ENCODE measurements at regions of chr9 and their contacts with region 1.

Region 1: GRCh38 chr9:97598461-97599288 is 34.5 kb downstream of the TSTD2 start:
- DNase-seq: peak; percentile 82
- ATAC-seq: peak; percentile 93
- H3K4me3 ChIP-seq: no peak overlapping the region
- H3K27ac ChIP-seq: no peak overlapping the region
- H3K4me1 ChIP-seq: no peaks in the 10 kb centered on the region; the same call in 1 of the 2 replicates
- H3K27me3 ChIP-seq: no peaks in the 10 kb centered on the region
- CTCF ChIP-seq: peak; percentile 85
- POLR2A ChIP-seq: no peak
- RAD21 ChIP-seq: peak; percentile 84

Region 2: DNA sequence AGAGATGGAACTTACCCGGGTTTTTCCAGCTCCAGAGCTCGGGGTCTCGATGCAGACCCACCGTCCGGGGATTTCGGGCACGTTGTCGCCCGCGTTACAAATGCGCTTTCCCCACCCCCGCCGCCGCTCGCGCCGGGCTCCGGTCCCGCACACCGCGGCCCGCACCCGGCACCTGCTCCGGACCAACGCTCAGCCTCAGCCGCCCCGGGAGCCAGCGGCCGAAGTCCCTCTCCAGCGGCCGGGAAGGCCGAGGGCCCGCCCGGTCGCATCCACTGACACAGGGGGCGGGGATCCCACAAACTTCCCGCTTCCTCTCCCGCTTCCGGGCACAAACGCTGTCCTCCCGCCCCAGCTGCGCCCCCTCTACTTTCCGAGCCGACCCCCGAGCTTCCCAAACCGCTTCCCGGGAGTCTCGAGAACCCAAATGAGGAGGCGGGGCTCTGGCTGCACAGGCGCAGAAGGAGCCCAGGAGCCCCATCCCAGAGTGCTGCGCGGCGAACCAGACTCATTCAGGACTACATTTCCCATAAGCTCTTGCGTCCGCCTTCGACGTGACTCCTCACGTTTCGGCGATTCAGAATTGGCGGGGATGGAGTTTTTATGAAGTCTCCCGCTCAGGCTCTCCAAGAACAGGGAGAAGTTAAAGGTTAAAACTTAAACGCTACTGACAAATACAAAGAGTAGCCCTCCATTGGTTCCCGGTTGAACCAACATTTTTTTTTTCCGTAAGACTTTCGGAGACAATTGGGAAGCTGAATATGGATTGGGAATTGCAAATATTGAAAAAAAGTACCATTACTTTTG is 744.4 kb before region 1 on chr9 and contains the start of gene ZNF782:
- CTCF ChIA-PET with region 1: interaction called, 6 read pairs
- POLR2A ChIA-PET with region 1: no interaction called
- dilution Hi-C with region 1: no loop called
- in situ Hi-C with region 1: no loop called
- intact Hi-C with region 1: loop called (anchors 5 kb)
- DNase-seq: peak; percentile 93
- ATAC-seq: peak; percentile 96
- H3K4me3 ChIP-seq: peak within 1 kb of the TSS; percentile 58
- H3K27ac ChIP-seq: peak within 1 kb of the TSS; percentile 31; the same call in 1 of the 2 replicates
- H3K4me1 ChIP-seq: peaks cover 7% of the 10 kb centered on the region
- H3K27me3 ChIP-seq: no peaks in the 10 kb centered on the region
- CTCF ChIP-seq: no peak
- POLR2A ChIP-seq: no peak
- RAD21 ChIP-seq: no peak
- total RNA-seq, gene ZNF782: 3.1 and 4.3 TPM in 2 replicates

Region 3: GRCh38 chr9:97411789-97412625 is 186.7 kb before region 1 on chr9 and contains the start of gene TDRD7:
- CTCF ChIA-PET with region 1: interaction called, 6 read pairs
- POLR2A ChIA-PET with region 1: no interaction called
- dilution Hi-C with region 1: no loop called
- in situ Hi-C with region 1: no loop called
- intact Hi-C with region 1: loop called (anchors 1 kb)
- DNase-seq: peak; percentile 75
- ATAC-seq: peak; percentile 96
- H3K4me3 ChIP-seq: peak within 1 kb of the TSS; percentile 85
- H3K27ac ChIP-seq: no peak within 1 kb of the TSS; the same call in 1 of the 2 replicates
- H3K4me1 ChIP-seq: peaks cover 3% of the 10 kb centered on the region; the same call in 1 of the 2 replicates
- H3K27me3 ChIP-seq: peaks cover 11% of the 10 kb centered on the region; the same call in 1 of the 2 replicates
- CTCF ChIP-seq: peak; percentile 100
- POLR2A ChIP-seq: no peak
- RAD21 ChIP-seq: peak; percentile 68
- total RNA-seq, gene TDRD7: 8.1 and 9.7 TPM in 2 replicates

Region 4: GRCh38 chr9:97468658-97469448 is 129.8 kb before region 1 on chr9:
- CTCF ChIA-PET with region 1: interaction called, 119 read pairs
- POLR2A ChIA-PET with region 1: interaction called, 3 read pairs
- dilution Hi-C with region 1: no loop called
- in situ Hi-C with region 1: no loop called
- intact Hi-C with region 1: loop called (anchors 1 kb)
- DNase-seq: peak; percentile 65
- ATAC-seq: peak; percentile 97
- H3K4me3 ChIP-seq: no peak overlapping the region
- H3K27ac ChIP-seq: no peak overlapping the region
- H3K4me1 ChIP-seq: peaks cover 2% of the 10 kb centered on the region
- H3K27me3 ChIP-seq: no peaks in the 10 kb centered on the region
- CTCF ChIP-seq: peak; percentile 95
- POLR2A ChIP-seq: peak; percentile 55; the same call in 1 of the 2 replicates
- RAD21 ChIP-seq: peak; percentile 98

Region 5: DNA sequence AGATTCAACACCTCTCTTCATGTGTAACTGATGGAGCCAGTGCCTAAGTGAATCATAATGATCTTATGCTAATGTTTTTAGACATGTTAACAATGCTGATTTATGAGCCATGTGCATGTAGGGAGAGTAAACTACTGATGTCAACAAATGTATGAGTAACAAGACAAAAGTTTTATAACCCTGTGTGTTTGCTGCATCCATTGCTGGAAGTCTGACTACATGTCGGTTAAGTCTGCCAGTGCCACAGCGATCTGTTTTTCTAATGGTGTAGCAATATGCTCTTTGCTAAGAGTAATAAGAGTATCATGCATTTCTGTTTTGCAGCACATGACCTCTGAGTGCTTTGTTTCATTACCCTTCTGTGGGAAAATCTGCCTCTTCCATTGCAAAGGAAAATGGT is 123.6 kb before region 1 on chr9:
- CTCF ChIA-PET with region 1: interaction called, 119 read pairs
- POLR2A ChIA-PET with region 1: no interaction called
- dilution Hi-C with region 1: no loop called
- in situ Hi-C with region 1: no loop called
- intact Hi-C with region 1: no loop called
- DNase-seq: peak; percentile 89
- ATAC-seq: peak; percentile 82
- H3K4me3 ChIP-seq: no peak overlapping the region
- H3K27ac ChIP-seq: no peak overlapping the region
- H3K4me1 ChIP-seq: peaks cover 18% of the 10 kb centered on the region
- H3K27me3 ChIP-seq: no peaks in the 10 kb centered on the region
- CTCF ChIP-seq: no peak
- POLR2A ChIP-seq: no peak
- RAD21 ChIP-seq: no peak

Region 6: DNA sequence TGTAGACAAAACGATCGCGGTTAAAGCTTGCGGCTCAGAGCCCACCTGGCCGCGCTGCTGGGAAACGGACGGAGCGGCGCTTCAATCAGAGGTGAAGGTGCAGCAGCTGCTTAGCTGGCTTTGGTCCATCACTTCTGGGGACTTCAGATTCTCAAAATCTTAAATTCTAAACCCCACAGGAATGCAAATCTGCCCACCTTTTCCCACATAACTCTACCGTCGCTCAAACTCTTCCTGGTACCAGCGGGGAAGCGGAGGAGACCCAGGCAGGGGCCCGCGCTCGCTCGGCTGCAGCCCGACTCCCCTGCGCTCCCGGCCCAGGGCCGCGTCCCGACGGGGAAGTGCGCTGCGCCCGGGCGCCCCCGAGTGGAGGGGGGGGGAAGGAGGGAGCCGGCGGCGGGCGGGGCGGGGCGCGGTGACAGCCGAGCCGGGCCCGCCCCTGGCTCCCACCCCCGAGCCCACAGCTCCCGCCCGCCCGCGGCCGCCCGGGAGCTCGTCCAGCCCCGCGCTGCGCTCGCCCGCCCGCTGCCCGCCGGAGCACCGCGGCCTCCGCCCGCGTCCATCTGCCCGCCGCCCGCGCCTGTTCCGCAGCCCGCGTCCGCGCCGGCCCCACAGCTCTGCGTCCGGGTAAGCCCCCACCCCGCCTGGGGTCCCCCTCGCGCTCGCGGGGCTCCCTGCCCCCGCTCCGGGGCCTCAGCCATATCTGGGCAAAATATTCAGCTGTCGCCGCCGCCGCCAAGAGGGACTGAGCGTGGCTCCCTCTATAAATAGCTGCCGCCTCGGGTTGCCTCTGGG is 97.3 kb before region 1 on chr9 and contains the start of gene TMOD1:
- CTCF ChIA-PET with region 1: interaction called, 13 read pairs
- POLR2A ChIA-PET with region 1: no interaction called
- dilution Hi-C with region 1: no loop called
- in situ Hi-C with region 1: no loop called
- intact Hi-C with region 1: no loop called
- DNase-seq: peak; percentile 34
- ATAC-seq: peak; percentile 94
- H3K4me3 ChIP-seq: peak within 1 kb of the TSS; percentile 68
- H3K27ac ChIP-seq: no peak within 1 kb of the TSS; the same call in 1 of the 2 replicates
- H3K4me1 ChIP-seq: peaks cover 18% of the 10 kb centered on the region; the same call in 1 of the 2 replicates
- H3K27me3 ChIP-seq: peaks cover 23% of the 10 kb centered on the region
- CTCF ChIP-seq: peak; percentile 18; the same call in 1 of the 2 replicates
- POLR2A ChIP-seq: no peak
- RAD21 ChIP-seq: peak; percentile 16; the same call in 1 of the 2 replicates
- total RNA-seq, gene TMOD1: 0.18 and 0.28 TPM in 2 replicates

Region 7: DNA sequence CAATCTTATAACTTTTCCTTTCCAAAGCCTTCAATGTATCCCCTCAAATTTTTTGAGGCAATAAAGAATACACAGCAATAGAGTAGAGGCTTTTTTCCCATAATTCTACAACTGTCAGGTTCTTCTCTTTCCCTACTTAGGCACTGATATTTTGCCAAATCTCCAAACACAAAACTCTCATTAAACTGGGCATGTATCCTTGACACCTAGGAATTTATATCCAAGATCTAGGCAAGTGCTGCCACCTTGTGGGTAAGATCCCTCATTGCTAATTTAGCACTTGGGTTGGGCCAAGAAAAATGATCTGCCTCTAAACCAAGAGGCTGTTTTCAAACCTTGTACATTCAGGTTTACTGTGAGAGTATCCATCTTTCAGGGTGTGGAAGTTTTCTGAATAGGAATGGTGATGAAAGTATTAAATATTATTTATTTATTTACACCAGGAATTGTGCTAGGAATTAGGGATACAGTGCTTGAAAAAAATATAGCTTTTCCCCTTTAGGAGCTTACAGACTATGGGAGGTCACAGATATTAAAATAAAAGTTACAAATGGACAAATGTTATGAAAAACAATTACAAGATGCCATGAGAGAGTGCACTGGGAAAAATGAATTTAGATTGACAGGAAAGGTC is 16.9 kb after region 1 on chr9:
- CTCF ChIA-PET with region 1: interaction called, 13 read pairs
- POLR2A ChIA-PET with region 1: no interaction called
- dilution Hi-C with region 1: no loop called
- in situ Hi-C with region 1: no loop called
- intact Hi-C with region 1: loop called (anchors 1 kb)
- DNase-seq: peak; percentile 54
- ATAC-seq: peak; percentile 88
- H3K4me3 ChIP-seq: no peak overlapping the region
- H3K27ac ChIP-seq: no peak overlapping the region
- H3K4me1 ChIP-seq: no peaks in the 10 kb centered on the region
- H3K27me3 ChIP-seq: no peaks in the 10 kb centered on the region
- CTCF ChIP-seq: peak; percentile 79
- POLR2A ChIP-seq: no peak
- RAD21 ChIP-seq: peak; percentile 73

Region 8: DNA sequence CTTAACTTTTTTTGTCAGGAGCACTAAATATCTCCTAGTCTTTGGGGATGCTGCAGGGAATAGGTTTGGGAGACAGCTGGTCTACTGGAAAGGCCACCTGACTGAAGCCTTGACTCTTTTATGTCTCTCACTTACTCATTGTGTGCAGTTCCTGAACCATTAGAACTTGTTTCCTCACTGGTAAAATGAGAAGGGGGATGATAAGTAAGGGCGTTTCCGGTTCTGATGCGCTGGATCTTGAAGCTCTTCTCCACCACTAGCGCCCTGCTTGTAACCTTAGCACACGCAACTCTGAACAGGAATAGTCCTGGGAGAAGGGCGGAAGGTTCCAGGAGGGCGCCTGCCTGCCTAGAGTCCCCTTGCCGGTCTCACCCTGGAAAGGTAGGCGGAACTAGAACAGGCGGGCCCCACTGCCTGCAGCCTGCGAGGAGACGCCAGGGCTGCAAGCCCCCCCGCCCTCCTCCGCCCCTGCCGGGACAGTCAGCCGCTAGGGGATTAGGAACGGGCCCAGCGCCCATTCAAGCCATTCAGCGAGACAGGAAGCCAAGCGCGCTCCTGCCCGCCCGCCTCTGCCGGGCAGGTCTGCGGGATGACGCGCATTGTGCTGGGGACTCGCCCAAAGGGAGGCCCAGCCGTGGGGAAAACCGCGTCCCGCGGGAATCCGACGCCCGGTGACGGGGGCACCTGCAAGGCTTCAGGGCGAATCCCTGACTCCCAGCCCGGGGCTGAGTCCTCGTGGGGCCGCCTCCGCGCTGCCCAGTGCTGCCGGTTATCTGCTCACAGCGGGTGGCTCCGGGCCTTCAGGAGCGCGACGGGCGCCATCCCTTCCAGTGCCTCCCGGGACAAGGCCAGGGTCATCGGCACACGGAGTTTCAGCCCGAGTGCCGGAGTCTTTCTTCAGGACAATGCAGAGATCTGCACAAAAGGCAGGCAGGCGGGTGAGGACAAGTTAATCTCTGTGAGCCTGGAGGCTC is 142.5 kb after region 1 on chr9:
- CTCF ChIA-PET with region 1: no interaction called
- POLR2A ChIA-PET with region 1: no interaction called
- dilution Hi-C with region 1: no loop called
- in situ Hi-C with region 1: no loop called
- intact Hi-C with region 1: no loop called
- DNase-seq: peak; percentile 62
- ATAC-seq: peak; percentile 82
- H3K4me3 ChIP-seq: peak overlapping the region; percentile 6; the same call in 1 of the 2 replicates
- H3K27ac ChIP-seq: no peak overlapping the region
- H3K4me1 ChIP-seq: no peaks in the 10 kb centered on the region
- H3K27me3 ChIP-seq: peaks cover 45% of the 10 kb centered on the region
- CTCF ChIP-seq: no peak; the same call in 1 of the 2 replicates
- POLR2A ChIP-seq: no peak
- RAD21 ChIP-seq: no peak